CD8-positive, alpha-beta T cell (primary cell): ENCODE measurements at regions of chr1 and their contacts with region 1.

Region 1: GRCh38 chr1:228165372-228166169 is at the start of gene IBA57:
- DNase-seq: peak; percentile 99 to 100 (median 100)
- ATAC-seq: peak; percentile 82
- H3K4me3 ChIP-seq: peak within 1 kb of the TSS; percentile 70 to 92
- H3K4me3 Mint-ChIP-seq: peak within 1 kb of the TSS; percentile 85
- H3K27ac ChIP-seq: peak within 1 kb of the TSS; percentile 94 to 99
- H3K27ac Mint-ChIP-seq: peak within 1 kb of the TSS; percentile 98
- H3K4me1 ChIP-seq: peaks cover 44% of the 10 kb centered on the region
- H3K4me1 Mint-ChIP-seq: peaks cover 52% of the 10 kb centered on the region
- H3K27me3 ChIP-seq: no peaks in the 10 kb centered on the region
- H3K27me3 Mint-ChIP-seq: no peaks in the 10 kb centered on the region
- CTCF ChIP-seq: peak; percentile 68
- total RNA-seq, gene IBA57: 23.5 to 23.8 TPM

Region 2: DNA sequence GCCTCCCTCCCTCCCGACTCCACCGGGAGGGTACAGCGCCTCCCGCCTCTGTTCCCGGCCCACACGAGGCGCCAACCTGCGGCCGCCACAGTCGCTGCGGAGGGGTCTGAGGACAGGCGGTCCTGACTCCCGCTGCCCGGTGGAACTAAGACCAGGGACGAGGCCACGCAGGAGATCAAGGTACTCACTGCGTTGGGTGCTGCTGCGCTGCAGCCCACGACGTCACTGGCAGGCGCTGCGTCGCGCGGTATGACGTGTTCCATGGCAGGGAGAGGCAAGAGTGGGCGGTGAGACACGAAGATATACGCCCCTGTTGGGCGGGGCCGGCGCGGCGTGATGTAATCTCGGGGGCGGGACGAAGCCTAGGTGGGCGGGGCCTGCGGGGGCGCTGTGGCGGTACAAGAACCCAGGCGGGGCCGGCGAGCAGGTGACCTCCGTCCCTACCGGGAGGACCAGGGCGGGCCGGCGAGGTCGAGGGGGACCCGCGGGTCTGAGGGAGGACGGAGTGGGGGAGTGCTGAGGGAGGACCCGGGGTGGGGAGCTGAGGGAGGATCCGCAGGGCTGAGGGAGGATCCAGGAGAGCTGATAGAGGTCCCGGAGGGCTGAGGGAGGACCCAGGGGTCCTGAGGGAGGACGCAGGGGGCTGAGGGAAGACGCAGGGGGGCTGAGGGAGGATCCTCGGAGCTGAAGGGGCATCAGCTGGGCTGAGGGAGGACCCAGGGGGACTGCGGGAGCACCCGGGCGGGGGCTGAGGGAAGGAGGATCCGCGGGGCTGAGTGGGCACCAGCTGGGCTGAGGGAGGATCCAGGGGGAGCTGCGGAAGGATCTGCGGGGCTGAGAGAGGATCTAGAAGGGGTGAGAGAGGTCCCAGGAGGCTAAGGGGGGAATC is 56.3 kb before region 1 on chr1 and contains the start of gene MRPL55:
- CTCF ChIA-PET with region 1: interaction called, 4 read pairs
- POLR2A ChIA-PET with region 1: interaction called, 19 read pairs
- intact Hi-C with region 1: loop called (anchors 1 kb)
- DNase-seq: peak; percentile 97 to 100 (median 98)
- ATAC-seq: peak; percentile 97
- H3K4me3 ChIP-seq: peak within 1 kb of the TSS; percentile 93 to 98
- H3K4me3 Mint-ChIP-seq: peak within 1 kb of the TSS; percentile 95
- H3K27ac ChIP-seq: peak within 1 kb of the TSS; percentile 90 to 94
- H3K27ac Mint-ChIP-seq: peak within 1 kb of the TSS; percentile 96
- H3K4me1 ChIP-seq: peaks cover 21% of the 10 kb centered on the region
- H3K4me1 Mint-ChIP-seq: peaks cover 26% of the 10 kb centered on the region
- H3K27me3 ChIP-seq: no peaks in the 10 kb centered on the region
- H3K27me3 Mint-ChIP-seq: no peaks in the 10 kb centered on the region
- CTCF ChIP-seq: no peak
- total RNA-seq, gene MRPL55: 90.2 to 90.7 TPM

Region 3: GRCh38 chr1:228154670-228155571 is 10.7 kb before region 1 on chr1:
- CTCF ChIA-PET with region 1: interaction called, 6 read pairs
- POLR2A ChIA-PET with region 1: interaction called, 28 read pairs
- intact Hi-C with region 1: no loop called
- DNase-seq: peak in 3 of 9 experiments; percentile 39 to 72 (median 48)
- ATAC-seq: peak; percentile 71
- H3K4me3 ChIP-seq: no peak overlapping the region
- H3K4me3 Mint-ChIP-seq: peak overlapping the region; percentile 59
- H3K27ac ChIP-seq: no peak overlapping the region
- H3K27ac Mint-ChIP-seq: peak overlapping the region; percentile 89
- H3K4me1 ChIP-seq: peaks cover 32% of the 10 kb centered on the region
- H3K4me1 Mint-ChIP-seq: peaks cover 35% of the 10 kb centered on the region
- H3K27me3 ChIP-seq: no peaks in the 10 kb centered on the region
- H3K27me3 Mint-ChIP-seq: no peaks in the 10 kb centered on the region
- CTCF ChIP-seq: no peak

Region 4: GRCh38 chr1:228212966-228213844 is 47.6 kb after region 1 on chr1:
- CTCF ChIA-PET with region 1: interaction called, 4 read pairs
- POLR2A ChIA-PET with region 1: interaction called, 10 read pairs
- intact Hi-C with region 1: loop called (anchors 1 kb)
- DNase-seq: peak; percentile 86 to 93 (median 92)
- ATAC-seq: peak; percentile 89
- H3K4me3 ChIP-seq: peak overlapping the region; percentile 61 to 76
- H3K4me3 Mint-ChIP-seq: peak overlapping the region; percentile 90
- H3K27ac ChIP-seq: peak overlapping the region; percentile 36 to 55
- H3K27ac Mint-ChIP-seq: peak overlapping the region; percentile 93
- H3K4me1 ChIP-seq: peaks cover 13% of the 10 kb centered on the region
- H3K4me1 Mint-ChIP-seq: peaks cover 11% of the 10 kb centered on the region
- H3K27me3 ChIP-seq: peaks cover 0 to 2% of the 10 kb centered on the region in 2 experiments
- H3K27me3 Mint-ChIP-seq: no peaks in the 10 kb centered on the region
- CTCF ChIP-seq: peak; percentile 24

Region 5: GRCh38 chr1:228457396-228458176 is 292.0 kb after region 1 on chr1:
- CTCF ChIA-PET with region 1: interaction called, 6 read pairs
- POLR2A ChIA-PET with region 1: interaction called, 6 read pairs
- intact Hi-C with region 1: loop called (anchors 1 kb)
- DNase-seq: peak; percentile 68 to 98 (median 80)
- ATAC-seq: peak; percentile 85
- H3K4me3 ChIP-seq: peak overlapping the region; percentile 69 to 91
- H3K4me3 Mint-ChIP-seq: peak overlapping the region; percentile 93
- H3K27ac ChIP-seq: peak overlapping the region; percentile 91 to 93
- H3K27ac Mint-ChIP-seq: peak overlapping the region; percentile 99
- H3K4me1 ChIP-seq: peaks cover 23% of the 10 kb centered on the region
- H3K4me1 Mint-ChIP-seq: peaks cover 39% of the 10 kb centered on the region
- H3K27me3 ChIP-seq: no peaks in the 10 kb centered on the region
- H3K27me3 Mint-ChIP-seq: peaks cover 4% of the 10 kb centered on the region
- CTCF ChIP-seq: peak; percentile 31

Region 6: DNA sequence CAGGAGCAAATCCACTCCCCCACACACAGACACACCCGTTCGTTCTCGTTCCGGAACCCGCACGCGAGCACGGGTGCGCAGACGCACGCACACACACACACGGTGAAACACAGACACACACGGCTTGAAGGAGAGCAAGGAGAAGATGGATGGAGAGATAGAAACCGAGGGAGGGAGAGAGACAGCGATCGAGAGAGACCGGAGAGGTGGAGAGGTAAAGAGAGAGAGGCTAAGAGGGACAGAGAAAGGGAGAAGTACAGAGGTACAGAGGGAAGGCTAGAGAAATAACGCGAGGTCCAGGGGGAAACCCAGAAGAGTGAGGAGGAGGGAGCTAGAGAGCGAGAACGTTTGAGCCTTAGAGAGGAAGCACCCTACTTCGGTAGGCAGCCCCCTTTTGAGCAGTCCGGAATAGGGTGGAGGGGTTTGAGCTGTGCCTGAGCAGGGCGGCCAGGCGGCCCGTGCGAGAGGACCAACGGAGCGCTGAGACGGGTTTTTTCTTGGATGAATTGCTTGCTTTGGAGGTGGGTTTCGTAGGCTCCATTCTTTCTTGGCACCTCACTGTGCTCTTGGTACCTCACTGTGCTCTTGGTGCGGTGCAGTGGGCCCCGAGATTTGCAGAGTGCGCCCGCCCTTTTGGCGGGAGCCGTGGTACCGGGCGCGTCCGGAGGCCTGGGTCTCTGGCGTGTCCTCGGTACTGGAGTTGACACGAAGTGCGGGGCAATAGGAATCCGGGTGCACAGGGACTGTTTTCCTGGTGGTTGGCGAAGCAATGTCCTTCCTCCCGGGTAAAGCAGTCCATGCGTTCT is 481.3 kb after region 1 on chr1:
- CTCF ChIA-PET with region 1: no interaction called
- POLR2A ChIA-PET with region 1: no interaction called
- intact Hi-C with region 1: no loop called
- DNase-seq: peak in 6 of 9 experiments; percentile 17 to 75 (median 52)
- ATAC-seq: peak; percentile 69
- H3K4me3 ChIP-seq: peak overlapping the region; percentile 64 to 69
- H3K4me3 Mint-ChIP-seq: peak overlapping the region; percentile 94
- H3K27ac ChIP-seq: no peak overlapping the region
- H3K27ac Mint-ChIP-seq: peak overlapping the region; percentile 30
- H3K4me1 ChIP-seq: peaks cover 23% of the 10 kb centered on the region
- H3K4me1 Mint-ChIP-seq: peaks cover 24% of the 10 kb centered on the region
- H3K27me3 ChIP-seq: peaks cover 18 to 32% of the 10 kb centered on the region in 2 experiments
- H3K27me3 Mint-ChIP-seq: peaks cover 34% of the 10 kb centered on the region
- CTCF ChIP-seq: no peak